ENCODE measurements at regions of chr19 and their contacts with region 1.

Region 1: GRCh38 chr19:29941828-29942403 is at the start of gene URI1:
- DNase-seq: peak; percentile 92 to 96 (median 94)
- ATAC-seq: peak; percentile 82
- H3K4me3 ChIP-seq: peak within 1 kb of the TSS; percentile 90
- H3K27ac ChIP-seq: peak within 1 kb of the TSS; percentile 82
- H3K4me1 ChIP-seq: peaks cover 11 to 12% of the 10 kb centered on the region in 2 experiments; a peak in 4 of 5 replicates
- H3K27me3 ChIP-seq: no peaks in the 10 kb centered on the region
- CTCF ChIP-seq: no peak
- EP300 ChIP-seq: no peak; the same call in 1 of the 2 replicates
- POLR2A ChIP-seq: peak; percentile 76
- RAD21 ChIP-seq: no peak
- polyA plus RNA-seq, gene URI1: 16.9 to 19.8 TPM

Region 2: GRCh38 chr19:29851769-29852521 is 90.0 kb before region 1 on chr19:
- CTCF ChIA-PET with region 1: no interaction called
- POLR2A ChIA-PET with region 1: no interaction called
- in situ Hi-C with region 1: no loop called
- intact Hi-C with region 1: no loop called
- DNase-seq: no peak
- ATAC-seq: no peak
- H3K4me3 ChIP-seq: no peak overlapping the region
- H3K27ac ChIP-seq: no peak overlapping the region
- H3K4me1 ChIP-seq: peaks cover 9% of the 10 kb centered on the region in 2 experiments; a peak in 4 of 5 replicates
- H3K27me3 ChIP-seq: peaks cover 0 to 5% of the 10 kb centered on the region in 2 experiments; a peak in 1 of 5 replicates
- CTCF ChIP-seq: no peak
- EP300 ChIP-seq: no peak
- POLR2A ChIP-seq: no peak
- RAD21 ChIP-seq: no peak

Region 3: GRCh38 chr19:29893606-29894284 is 48.2 kb before region 1 on chr19:
- CTCF ChIA-PET with region 1: no interaction called
- POLR2A ChIA-PET with region 1: interaction called, 3 read pairs
- in situ Hi-C with region 1: no loop called
- intact Hi-C with region 1: loop called (anchors 5 kb)
- DNase-seq: peak; percentile 92 to 97 (median 94)
- ATAC-seq: peak; percentile 99
- H3K4me3 ChIP-seq: no peak overlapping the region
- H3K27ac ChIP-seq: peak overlapping the region; percentile 14; the same call in 1 of the 3 replicates
- H3K4me1 ChIP-seq: peaks cover 23 to 29% of the 10 kb centered on the region in 2 experiments
- H3K27me3 ChIP-seq: no peaks in the 10 kb centered on the region
- CTCF ChIP-seq: no peak
- EP300 ChIP-seq: peak; percentile 97
- POLR2A ChIP-seq: no peak
- RAD21 ChIP-seq: no peak

Measured in K562 (cell line).